ENCODE measurements at regions of chr11 and their contacts with region 1.

Region 1: DNA sequence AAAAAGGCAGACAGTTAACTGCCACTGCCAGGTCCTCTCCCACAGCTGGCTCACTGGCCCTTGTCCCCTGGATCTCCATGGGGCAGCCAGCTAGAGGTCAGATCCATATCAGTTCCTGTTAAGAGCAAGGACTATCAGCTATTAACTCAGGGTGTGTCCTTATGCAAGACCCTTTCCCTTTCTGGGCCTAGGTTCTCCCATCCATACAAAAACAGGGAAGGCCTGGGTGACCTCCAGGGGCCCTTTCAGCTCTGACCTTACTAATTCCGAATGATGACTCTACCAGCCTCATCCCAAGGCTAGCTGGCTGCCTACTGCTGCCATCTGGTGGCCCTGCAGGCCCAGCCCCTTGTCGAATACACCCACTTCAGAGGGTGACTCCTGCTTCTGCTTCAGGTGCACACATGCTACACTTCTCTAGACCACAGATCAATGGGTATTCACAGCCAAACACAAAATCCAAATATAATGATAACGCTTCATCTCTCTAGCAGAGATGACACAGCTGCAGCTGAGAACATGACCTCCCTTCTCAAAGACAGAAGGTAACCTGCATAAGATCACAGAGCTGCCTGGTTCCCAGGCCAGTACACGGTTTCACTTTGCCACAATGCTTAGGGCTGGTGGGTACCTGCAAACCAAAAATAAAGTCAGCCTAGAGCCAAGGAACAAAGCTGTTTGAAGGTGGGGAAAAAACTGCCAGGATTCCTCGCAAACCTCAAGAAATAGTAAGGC is 34.1 kb downstream of the SERGEF start:
- DNase-seq: peak; percentile 54 to 78
- ATAC-seq: peak; percentile 92 to 97 (median 94)
- H3K4me3 ChIP-seq: no peak overlapping the region
- H3K27ac ChIP-seq: no peak overlapping the region
- H3K4me1 ChIP-seq: peaks cover 5% of the 10 kb centered on the region
- H3K27me3 ChIP-seq: no peaks in the 10 kb centered on the region
- CTCF ChIP-seq: peak; percentile 79

Region 2: DNA sequence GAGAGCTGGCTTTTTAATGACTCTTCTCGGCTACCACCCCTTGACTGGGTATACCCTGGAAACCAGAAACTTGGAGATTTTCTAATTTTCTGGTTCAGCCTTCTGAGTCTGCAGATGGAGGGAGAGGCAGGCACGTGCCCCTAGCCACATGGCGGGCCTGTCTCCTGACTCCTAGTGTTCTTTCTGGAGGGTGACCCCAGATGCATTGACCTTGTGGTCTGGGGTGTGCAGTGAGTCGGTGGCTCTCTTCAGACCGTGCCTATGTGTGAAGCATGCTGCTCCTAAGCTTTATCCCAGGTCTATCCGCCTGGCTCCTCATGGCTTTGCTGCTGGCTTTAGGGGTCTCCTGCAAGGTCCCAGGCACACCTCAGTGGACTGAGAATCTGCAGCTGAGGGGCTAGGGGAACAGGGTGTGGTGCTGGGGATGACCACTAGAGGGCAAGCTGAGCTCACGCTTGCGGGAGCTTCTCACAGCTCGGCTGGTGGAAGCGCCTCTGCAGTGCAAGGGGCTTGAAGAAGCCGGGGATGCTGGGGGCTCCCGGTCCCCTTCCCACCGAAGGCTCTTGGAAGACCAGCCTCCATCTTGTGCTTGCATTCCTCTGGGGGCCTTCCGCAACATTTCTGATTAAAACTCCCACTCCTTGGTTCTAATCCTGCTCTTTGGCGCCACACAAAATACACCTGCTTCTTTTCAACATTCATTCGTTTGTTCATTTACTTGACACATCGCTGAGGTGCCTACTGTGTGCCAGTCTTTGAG is 379.8 kb before region 1 on chr11:
- intact Hi-C with region 1: loop called (anchors 1 to 5 kb)
- DNase-seq: peak; percentile 74 to 87
- ATAC-seq: peak; percentile 88 to 96 (median 94)
- H3K4me3 ChIP-seq: no peak overlapping the region
- H3K27ac ChIP-seq: no peak overlapping the region
- H3K4me1 ChIP-seq: no peaks in the 10 kb centered on the region
- H3K27me3 ChIP-seq: no peaks in the 10 kb centered on the region
- CTCF ChIP-seq: peak; percentile 98

Region 3: DNA sequence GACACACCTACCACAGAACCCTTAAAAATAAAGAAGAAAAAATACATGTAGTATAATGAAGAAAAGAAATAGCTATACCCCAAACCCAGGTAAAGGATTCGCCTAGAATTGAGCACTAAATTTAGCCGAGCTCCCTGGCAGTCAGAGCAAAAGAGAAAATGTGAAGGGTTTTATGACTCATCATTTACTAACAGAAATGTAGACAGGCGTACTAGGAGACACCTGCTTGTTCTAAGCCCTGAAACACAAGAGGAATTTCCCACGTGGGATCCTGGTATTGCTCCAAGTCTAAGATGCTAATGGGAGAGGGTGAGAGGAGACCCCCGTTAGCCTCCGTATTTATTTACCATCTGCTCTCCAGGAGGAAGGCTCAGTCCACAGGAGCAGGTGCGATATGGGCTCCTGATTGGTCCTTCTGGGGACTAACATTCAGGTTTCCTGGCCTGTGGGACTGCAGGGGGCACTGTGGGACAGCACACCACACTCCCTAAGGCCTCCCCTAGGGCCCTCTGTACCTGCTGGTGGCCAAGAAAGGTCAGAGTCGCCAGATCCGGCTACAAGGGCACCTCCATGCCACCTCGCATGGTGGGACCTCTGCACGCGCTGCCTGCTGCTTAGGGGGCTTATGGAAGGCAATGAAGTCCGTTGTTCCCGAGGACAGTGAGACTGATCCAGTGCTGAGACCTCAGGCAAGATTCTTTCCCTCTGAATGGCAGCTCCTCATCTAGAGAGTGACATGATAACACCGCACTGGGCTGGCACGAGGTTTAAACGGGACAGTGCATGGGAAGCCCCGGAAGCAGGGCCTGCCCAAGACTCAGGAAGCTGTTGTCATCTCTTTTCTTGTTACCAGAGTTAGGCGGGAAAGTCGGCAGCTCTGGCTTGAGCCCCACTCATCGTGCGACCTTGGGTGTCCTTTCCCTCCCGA is 218.4 kb before region 1 on chr11:
- intact Hi-C with region 1: loop called (anchors 2 to 5 kb)
- DNase-seq: peak; percentile 45 to 74
- ATAC-seq: peak; percentile 86 to 95 (median 93)
- H3K4me3 ChIP-seq: no peak overlapping the region
- H3K27ac ChIP-seq: peak overlapping the region; percentile 27
- H3K4me1 ChIP-seq: no peaks in the 10 kb centered on the region
- H3K27me3 ChIP-seq: no peaks in the 10 kb centered on the region
- CTCF ChIP-seq: peak; percentile 58

Region 4: DNA sequence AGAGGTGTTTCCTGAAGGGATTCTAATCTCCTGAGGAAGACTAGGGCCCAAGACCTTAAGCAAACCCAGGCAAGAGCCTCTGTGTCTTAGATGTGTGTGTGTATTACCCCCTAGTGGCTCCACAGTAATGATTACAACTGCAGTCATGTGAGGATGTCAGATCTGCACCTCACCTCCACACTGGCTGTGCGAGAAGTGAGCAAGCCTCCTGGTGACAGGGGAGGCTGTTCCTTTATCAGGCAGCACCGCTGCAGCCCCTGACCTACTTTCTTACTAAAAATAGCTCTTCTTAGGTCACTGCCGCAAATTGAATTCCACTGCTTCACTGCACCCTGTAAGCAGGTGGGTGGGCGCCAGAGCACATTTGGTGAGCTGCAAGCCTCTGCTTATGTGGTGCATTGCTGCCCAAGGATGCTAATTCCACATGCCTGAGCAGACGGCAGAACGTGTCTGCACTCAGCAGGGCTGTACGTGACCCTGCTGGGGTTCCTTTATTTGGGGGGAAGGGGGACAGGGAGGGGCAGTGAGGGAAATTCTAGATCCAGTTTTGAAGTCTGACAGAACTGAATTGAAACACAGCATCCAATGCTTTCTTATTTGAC is 131.8 kb before region 1 on chr11:
- intact Hi-C with region 1: loop called (anchors 5 kb)
- DNase-seq: peak; percentile 29 to 67
- ATAC-seq: peak; percentile 84 to 91 (median 90)
- H3K4me3 ChIP-seq: no peak overlapping the region
- H3K27ac ChIP-seq: peak overlapping the region; percentile 47
- H3K4me1 ChIP-seq: peaks cover 36% of the 10 kb centered on the region
- H3K27me3 ChIP-seq: no peaks in the 10 kb centered on the region
- CTCF ChIP-seq: peak; percentile 56

Region 5: GRCh38 chr11:17887779-17888178 is 90.9 kb before region 1 on chr11:
- intact Hi-C with region 1: no loop called
- DNase-seq: no peak
- ATAC-seq: no peak
- H3K4me3 ChIP-seq: no peak overlapping the region
- H3K27ac ChIP-seq: no peak overlapping the region
- H3K4me1 ChIP-seq: no peaks in the 10 kb centered on the region
- H3K27me3 ChIP-seq: no peaks in the 10 kb centered on the region
- CTCF ChIP-seq: no peak

Region 6: GRCh38 chr11:18229501-18229900 is 250.8 kb after region 1 on chr11:
- intact Hi-C with region 1: no loop called
- DNase-seq: no peak
- ATAC-seq: no peak
- H3K4me3 ChIP-seq: no peak overlapping the region
- H3K27ac ChIP-seq: no peak overlapping the region
- H3K4me1 ChIP-seq: no peaks in the 10 kb centered on the region
- H3K27me3 ChIP-seq: peaks cover 0 to 2% (median 0%) of the 10 kb centered on the region in 3 donors
- CTCF ChIP-seq: no peak

Measured in psoas muscle (tissue), 8 donors.